Colonic mucosa (tissue), 4 donors: ENCODE measurements at regions of chr10 and their contacts with region 1.

Region 1: DNA sequence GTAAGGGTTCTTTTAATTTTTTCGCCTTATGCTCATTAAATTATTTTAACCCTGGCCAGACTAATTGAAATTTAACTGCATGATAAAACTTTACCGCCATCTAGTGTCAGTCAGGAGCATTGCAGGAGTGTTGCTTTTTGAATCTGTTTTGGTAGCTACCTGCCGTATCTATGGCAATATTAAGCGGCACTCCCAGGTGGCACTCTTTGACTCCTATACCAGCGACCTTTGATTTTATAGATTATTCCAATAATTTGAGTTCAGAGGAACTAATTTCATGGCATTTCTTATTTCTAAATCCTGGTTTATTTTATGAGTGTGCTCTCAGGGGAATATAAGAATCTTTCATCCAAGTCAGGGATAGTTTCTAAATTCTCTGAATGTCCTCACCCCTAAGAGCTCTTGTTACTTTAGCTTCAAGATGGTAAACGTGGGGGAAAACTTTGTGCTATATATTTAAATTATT is 198.9 kb downstream of the REEP3 start:
- DNase-seq: peak; percentile 69
- H3K4me3 ChIP-seq: no peak overlapping the region
- H3K27ac ChIP-seq: no peak overlapping the region
- H3K4me1 ChIP-seq: peaks cover 6% of the 10 kb centered on the region
- H3K27me3 ChIP-seq: no peaks in the 10 kb centered on the region
- CTCF ChIP-seq: peak; percentile 97

Region 2: DNA sequence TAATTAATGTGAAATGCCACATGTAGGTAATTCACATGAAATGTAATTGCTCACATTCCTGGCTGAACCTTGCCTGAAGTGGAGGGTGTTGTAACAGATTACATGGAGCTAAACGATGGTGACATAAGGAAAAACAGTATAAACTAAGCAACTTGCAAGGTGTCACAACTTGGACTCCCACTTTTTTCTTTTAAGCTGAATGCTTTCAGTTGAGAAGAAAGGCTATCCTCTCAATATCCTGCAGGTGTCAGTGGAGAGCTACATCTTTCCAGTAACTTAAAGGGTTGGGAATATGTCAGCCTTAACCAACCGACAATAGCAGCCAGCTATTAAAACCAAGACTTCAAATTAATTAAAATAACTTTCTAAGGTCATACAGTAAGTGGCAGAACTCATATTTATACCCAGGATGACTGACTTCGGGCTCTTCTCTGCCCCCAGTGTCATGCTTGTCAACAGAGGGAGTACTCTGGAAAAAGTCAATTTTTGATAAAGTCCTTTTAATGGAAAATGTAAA is 553.3 kb before region 1 on chr10:
- intact Hi-C with region 1: loop called (anchors 5 kb)
- DNase-seq: peak; percentile 27
- H3K4me3 ChIP-seq: no peak overlapping the region
- H3K27ac ChIP-seq: no peak overlapping the region
- H3K4me1 ChIP-seq: no peaks in the 10 kb centered on the region
- H3K27me3 ChIP-seq: no peaks in the 10 kb centered on the region
- CTCF ChIP-seq: peak; percentile 80

Region 3: GRCh38 chr10:63210611-63211196 is 509.4 kb before region 1 on chr10:
- intact Hi-C with region 1: loop called (anchors 5 kb)
- DNase-seq: no peak
- H3K4me3 ChIP-seq: no peak overlapping the region
- H3K27ac ChIP-seq: no peak overlapping the region
- H3K4me1 ChIP-seq: peaks cover 10% of the 10 kb centered on the region
- H3K27me3 ChIP-seq: no peaks in the 10 kb centered on the region
- CTCF ChIP-seq: no peak

Region 4: DNA sequence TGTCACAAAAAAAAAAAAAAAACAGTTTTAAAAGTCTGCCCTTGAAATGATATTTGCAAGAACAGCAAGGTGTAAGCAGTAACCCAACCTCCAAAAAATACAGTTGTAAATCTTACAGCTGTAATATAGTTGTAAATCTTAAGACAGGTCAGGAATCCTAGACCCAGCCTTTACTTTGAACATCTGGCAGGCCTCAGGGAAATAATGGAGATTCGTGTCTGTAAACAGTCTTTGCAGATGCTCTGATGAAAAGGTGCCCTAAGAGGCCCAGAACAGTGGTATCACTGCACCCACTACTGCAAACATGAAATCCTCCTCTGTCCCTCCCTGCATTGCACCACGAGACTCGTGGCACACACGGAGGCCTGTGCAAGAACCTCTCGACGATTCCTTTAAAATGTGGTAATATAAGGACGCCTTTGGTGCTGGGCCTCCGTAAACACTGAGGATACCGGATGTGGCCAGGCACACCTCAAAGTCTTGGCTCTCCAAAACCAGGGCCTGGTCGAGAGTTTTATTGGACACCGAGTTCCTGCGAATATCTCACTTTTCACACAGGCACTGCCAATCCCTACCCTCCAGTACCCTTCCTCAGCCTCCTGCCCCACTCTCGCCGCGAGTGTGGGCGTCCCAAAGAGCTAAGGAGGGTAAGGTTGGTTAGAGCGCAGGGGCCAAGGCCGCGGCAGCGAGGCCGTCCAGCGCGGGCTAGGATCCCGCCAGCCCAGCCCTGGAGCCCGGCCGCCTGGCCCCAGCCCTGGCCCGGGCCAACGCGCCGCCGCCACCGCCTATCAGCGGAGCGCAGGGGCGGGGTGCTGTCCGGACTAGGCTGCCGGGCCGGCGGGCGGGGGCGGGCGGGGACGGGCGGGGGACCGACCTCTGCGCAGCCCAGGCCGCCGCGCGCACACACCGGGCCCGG is 199.3 kb before region 1 on chr10 and contains the start of gene REEP3:
- intact Hi-C with region 1: no loop called
- DNase-seq: peak; percentile 64
- H3K4me3 ChIP-seq: peak within 1 kb of the TSS; percentile 63
- H3K27ac ChIP-seq: peak within 1 kb of the TSS; percentile 96
- H3K4me1 ChIP-seq: no peaks in the 10 kb centered on the region
- H3K27me3 ChIP-seq: no peaks in the 10 kb centered on the region
- CTCF ChIP-seq: no peak
- total RNA-seq, gene REEP3: 33.1 to 66.0 TPM